ENCODE measurements at regions of chr1 and their contacts with region 1.

Region 1: GRCh38 chr1:101291562-101292380 is 55.0 kb downstream of the S1PR1 start:
- DNase-seq: peak in 1 of 2 donors; percentile 52
- H3K4me3 ChIP-seq: no peak overlapping the region
- H3K27ac ChIP-seq: no peak overlapping the region
- H3K4me1 ChIP-seq: no peaks in the 10 kb centered on the region
- H3K27me3 ChIP-seq: no peaks in the 10 kb centered on the region
- CTCF ChIP-seq: no peak
- POLR2A ChIP-seq: no peak

Region 2: GRCh38 chr1:100921109-100921706 is 370.6 kb before region 1 on chr1:
- intact Hi-C with region 1: loop called (anchors 10 kb)
- DNase-seq: no peak
- H3K4me3 ChIP-seq: no peak overlapping the region
- H3K27ac ChIP-seq: no peak overlapping the region
- H3K4me1 ChIP-seq: no peaks in the 10 kb centered on the region
- H3K27me3 ChIP-seq: no peaks in the 10 kb centered on the region
- CTCF ChIP-seq: peak; percentile 38 to 73 (median 41)
- POLR2A ChIP-seq: no peak

Region 3: DNA sequence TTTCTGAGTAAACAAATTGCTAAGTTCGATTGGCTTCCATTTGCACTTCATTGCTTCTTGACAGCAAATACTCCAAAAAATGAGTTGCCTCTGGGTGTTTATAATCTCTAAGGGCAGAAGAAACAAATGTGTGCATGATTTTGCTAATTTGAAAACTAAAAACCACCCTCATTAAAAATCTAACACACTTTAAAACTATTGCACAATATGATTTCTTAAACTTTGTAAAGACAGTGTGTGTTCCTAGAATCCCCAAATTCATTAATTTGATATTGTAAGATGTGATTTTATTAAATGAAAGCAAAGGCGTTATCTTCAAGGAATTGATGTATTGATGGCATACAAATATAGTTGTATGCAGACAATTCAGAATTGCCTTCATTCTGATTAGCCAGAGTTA is 354.0 kb after region 1 on chr1:
- intact Hi-C with region 1: no loop called
- DNase-seq: no peak
- H3K4me3 ChIP-seq: no peak overlapping the region
- H3K27ac ChIP-seq: no peak overlapping the region
- H3K4me1 ChIP-seq: no peaks in the 10 kb centered on the region
- H3K27me3 ChIP-seq: no peaks in the 10 kb centered on the region
- CTCF ChIP-seq: no peak
- POLR2A ChIP-seq: no peak

Measured in vagina (tissue), 2 donors.